CD8-positive, alpha-beta T cell (primary cell): ENCODE measurements at regions of chr3 and their contacts with region 1.

Region 1: DNA sequence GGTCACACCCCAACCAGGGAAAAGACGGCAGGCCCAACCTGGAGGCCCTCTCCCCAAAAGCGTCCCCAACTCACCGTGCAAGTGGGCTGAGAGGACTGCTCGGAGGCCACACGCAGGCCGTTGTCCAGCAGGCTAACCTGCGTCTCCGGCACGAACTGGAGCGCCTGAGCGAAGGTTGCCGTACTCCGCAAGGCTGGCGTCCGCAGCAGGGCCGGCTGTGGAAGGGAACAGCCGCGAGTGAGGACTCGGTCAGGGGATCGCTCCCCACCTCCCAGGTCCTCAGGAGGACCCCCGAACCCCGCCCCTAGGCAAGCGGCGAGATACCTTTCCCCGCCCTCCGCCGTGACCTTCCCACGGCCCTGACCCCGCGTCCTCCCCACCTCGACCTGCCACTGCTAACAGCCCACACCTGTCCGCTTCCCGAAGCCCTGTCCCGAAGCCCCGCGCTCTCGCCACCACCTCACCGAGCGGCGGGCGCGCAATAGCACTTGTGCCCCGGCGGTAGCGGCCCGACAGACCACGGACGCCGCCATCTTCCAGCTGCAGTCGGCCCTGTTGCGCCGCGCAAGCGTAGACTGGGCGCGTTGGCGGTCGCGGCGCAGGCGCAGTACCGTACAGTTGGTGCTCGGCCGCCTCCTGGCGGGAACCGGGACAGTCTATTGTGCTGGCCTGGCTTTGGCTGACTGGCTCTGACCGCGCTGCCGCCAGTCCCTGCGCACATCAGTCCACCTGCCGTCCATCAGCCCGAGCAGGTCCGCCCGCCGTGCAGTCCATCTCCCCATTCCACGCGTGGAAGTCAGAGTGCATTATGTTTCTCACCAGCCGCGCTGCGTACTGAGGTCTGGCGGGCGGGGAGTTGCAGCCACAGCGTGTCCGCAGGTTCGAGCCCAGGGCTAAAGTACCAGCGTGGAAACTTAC is at the start of gene UQCRC1:
- DNase-seq: peak; percentile 82 to 96 (median 90)
- ATAC-seq: peak; percentile 99
- H3K4me3 ChIP-seq: peak within 1 kb of the TSS; percentile 78 to 99
- H3K4me3 Mint-ChIP-seq: peak within 1 kb of the TSS; percentile 99
- H3K27ac ChIP-seq: peak within 1 kb of the TSS; percentile 68 to 87
- H3K27ac Mint-ChIP-seq: peak within 1 kb of the TSS; percentile 98
- H3K4me1 ChIP-seq: peaks cover 15% of the 10 kb centered on the region
- H3K4me1 Mint-ChIP-seq: peaks cover 16% of the 10 kb centered on the region
- H3K27me3 ChIP-seq: no peaks in the 10 kb centered on the region
- H3K27me3 Mint-ChIP-seq: no peaks in the 10 kb centered on the region
- CTCF ChIP-seq: peak; percentile 78
- total RNA-seq, gene UQCRC1: 84.2 to 92.5 TPM

Region 2: DNA sequence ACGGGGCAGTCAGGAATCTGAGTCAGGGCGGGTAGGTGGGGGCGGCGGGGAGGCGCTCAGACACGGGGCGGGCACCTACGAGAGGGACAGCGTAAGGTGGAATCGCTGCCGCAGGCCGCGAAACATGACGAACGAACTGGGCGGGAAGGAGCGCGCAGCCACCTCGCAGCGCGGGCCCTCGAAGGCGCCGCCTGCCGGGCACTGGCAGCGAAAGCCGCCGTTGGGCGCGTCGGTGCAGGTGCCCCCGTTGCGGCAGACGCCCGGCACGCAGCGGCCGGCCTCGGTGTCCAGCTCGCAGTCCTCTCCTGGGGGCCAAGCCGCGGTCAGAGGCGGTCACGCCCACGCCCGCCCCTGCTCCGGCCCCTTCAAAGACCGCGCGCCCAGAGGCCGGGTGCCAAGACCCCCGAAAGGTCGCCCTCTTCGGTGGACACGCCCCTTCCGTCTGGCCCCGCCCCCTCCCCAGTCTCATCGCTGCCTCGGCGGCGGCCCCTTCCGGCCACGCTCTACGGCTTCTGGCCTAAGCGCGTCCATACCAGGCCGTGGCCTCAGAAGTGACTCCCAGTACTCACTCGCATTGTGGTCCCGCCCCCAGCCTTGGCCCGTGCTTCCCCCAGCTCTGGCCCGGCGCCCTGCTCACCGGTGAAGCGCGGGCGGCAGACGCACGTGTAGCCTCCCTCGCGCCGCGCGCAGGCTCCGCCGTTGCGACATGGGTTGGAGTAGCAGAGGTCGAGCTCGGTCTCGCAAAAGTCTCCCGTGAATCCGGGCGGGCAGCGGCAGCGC is 46.9 kb after region 1 on chr3:
- CTCF ChIA-PET with region 1: no interaction called
- POLR2A ChIA-PET with region 1: no interaction called
- intact Hi-C with region 1: loop called (anchors 1 kb)
- DNase-seq: peak; percentile 71 to 94 (median 83)
- ATAC-seq: peak; percentile 81
- H3K4me3 ChIP-seq: peak overlapping the region; percentile 53 to 83
- H3K4me3 Mint-ChIP-seq: peak overlapping the region; percentile 83
- H3K27ac ChIP-seq: peak overlapping the region; percentile 65 to 68
- H3K27ac Mint-ChIP-seq: peak overlapping the region; percentile 90
- H3K4me1 ChIP-seq: peaks cover 18% of the 10 kb centered on the region
- H3K4me1 Mint-ChIP-seq: peaks cover 18% of the 10 kb centered on the region
- H3K27me3 ChIP-seq: peaks cover 0 to 4% of the 10 kb centered on the region in 2 experiments
- H3K27me3 Mint-ChIP-seq: peaks cover 11% of the 10 kb centered on the region
- CTCF ChIP-seq: peak; percentile 60

Region 3: DNA sequence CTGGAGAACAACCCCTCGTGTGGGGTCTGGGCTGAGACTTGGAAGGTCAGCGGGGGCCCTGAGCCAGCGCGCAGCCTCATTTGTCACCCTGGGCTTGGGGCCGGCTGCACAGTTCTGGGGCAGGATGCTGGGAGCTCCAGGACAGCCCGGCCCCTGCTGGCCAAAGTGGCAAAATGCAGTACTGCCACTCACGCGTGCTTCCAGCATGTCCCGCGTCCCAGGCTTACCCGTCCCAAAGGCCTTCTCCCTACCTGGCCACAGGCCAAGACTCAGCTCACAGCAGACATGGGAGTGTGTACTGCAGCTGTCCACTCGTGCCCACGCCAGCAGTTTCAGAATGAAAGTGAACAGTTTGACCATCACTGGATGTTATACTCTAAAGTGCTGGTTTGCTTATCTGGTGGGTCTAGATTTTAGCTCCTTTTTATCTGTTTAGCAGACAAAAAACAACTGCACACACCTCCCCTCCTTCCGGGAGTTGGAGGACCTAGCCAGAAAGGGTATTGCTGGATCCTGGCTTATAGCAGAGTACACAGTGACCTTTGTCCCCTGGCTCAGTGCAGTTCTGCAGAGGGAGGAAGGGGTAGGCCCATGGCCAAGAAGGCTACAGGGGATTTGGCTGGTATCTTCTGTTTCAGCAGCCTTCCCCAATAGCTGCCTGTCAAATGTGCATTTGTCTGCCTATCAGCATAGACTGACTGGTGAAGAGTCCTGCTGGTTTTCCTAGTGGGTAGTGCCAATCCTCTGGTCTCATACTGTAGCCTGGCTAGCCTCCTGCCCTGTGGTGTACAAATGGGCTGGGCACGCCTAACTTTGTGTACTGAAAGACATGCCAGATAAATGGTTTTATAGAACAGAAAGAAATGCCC is 130.8 kb after region 1 on chr3:
- CTCF ChIA-PET with region 1: no interaction called
- POLR2A ChIA-PET with region 1: no interaction called
- intact Hi-C with region 1: no loop called
- DNase-seq: peak; percentile 9 to 66 (median 54)
- ATAC-seq: peak; percentile 86
- H3K4me3 ChIP-seq: no peak overlapping the region
- H3K4me3 Mint-ChIP-seq: no peak overlapping the region
- H3K27ac ChIP-seq: no peak overlapping the region
- H3K27ac Mint-ChIP-seq: no peak overlapping the region
- H3K4me1 ChIP-seq: peaks cover 3% of the 10 kb centered on the region
- H3K4me1 Mint-ChIP-seq: peaks cover 2% of the 10 kb centered on the region
- H3K27me3 ChIP-seq: no peaks in the 10 kb centered on the region
- H3K27me3 Mint-ChIP-seq: no peaks in the 10 kb centered on the region
- CTCF ChIP-seq: peak; percentile 60